ENCODE measurements at regions of chr5 and their contacts with region 1.

Region 1: DNA sequence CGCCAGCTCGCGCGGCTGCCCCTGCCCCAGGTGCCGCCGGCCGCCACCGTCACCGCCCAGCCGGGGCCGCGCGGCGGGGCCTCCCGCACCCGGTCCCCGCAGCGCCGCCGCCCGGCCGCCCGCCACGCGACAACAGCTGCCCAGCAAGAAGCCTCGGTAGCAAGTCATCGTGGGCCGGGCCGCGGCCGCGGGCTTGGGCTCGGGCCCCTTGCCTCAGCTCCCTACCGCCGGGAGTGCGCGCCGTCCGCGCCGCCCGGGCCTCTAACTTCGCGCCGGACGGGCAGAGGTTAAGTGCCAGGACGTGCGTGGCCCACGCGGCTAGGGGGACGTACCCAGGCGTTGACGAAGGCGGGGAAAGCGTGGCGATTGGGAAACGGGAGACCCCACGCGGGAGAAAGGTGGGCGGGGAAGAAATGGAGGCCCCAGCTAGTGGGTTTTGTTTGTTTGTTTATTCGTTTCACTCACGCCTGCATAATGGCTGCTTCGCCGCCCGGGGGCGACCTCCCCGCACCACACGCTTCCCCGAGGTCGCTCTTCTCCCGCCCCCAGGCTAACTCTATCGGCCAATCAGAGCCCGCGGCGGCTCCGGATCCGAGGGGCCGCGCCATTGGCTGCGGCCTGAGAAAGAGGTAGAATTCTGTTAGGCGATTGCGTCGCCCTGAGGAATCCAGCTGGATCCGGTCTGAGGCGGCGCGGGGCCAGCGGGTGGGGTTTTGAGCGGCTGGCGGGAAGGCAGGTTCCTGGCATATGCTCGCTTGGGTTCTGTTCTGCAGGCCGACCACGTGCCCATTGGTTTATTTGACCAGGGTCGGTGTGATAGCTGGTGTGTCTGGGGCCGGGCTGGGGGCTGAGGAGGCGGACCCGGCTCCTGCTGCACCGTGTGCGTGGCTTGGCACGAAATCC is at the start of gene NADK2:
- DNase-seq: peak; percentile 92 to 99 (median 96)

Region 2: DNA sequence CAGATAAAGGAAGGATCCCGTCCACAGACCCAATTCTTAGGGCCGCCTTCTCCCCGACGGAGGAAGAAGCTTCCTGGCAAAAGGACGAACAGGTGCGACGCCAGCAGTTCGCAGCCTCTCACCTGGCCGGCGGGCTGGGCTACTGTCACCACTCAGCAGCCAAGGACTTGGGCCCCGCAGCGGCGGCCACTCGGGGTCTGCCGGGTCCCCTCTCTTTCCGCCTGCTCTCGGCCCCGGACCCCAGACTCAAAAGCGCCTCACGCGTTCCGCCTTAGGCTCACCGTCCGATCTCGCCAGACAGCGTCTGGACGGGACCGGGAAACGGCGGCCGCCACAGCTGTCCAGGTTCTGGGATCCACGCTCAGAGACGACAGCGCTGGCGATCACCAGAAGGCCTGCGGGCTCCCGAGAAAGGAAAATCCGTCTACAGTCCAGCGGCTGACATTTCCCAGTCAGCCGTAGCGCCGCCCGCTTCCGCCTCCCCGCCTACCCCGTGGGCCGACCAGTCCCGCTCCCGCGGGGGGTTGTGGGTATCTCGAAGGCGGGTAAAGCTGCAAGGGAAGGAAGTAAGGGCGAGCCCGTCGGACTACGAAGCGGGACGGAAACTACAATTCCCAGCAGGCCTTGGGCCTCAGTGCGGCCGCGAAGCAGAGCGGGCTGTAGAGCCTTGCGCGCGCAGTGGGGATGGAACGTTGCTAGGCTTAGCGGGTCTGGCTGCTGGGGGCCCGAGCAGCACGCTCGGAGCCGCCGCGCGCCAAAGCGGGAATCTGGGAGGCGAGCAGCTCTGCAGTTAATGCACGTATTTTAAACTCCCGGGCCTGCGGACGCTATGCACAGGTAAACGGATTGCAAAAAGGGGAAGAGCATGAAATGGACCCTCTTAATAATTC is 90.2 kb before region 1 on chr5 and contains the starts of genes LMBRD2 and SKP2:
- intact Hi-C with region 1: loop called (anchors 5 kb)
- DNase-seq: peak; percentile 98 to 100 (median 99)

Region 3: DNA sequence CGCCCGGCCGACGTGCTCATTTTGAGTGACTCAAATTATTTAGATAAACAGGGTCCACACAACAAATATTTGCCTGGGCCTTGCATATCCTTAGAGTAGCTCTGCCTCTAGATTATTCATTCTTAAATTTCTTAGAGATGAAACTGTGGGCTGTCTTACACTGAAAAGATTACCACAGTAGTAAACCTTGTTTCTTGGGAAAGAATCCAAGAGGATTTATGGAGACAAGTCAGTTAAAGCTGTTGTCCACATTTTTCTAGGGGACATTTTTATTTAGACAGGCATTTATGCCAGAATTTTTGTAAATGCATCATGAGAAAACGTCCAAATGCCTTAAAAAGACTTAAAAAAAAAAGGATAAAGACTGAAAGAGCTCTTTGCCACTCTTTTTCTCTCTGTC is 92.4 kb after region 1 on chr5:
- intact Hi-C with region 1: no loop called
- DNase-seq: no peak

Region 4: GRCh38 chr5:36397901-36398536 is 156.1 kb after region 1 on chr5:
- intact Hi-C with region 1: no loop called
- DNase-seq: no peak